ENCODE measurements at regions of chr1 and their contacts with region 1.

Region 1: GRCh38 chr1:9874959-9875635 is 35.0 kb downstream of the CTNNBIP1 start:
- DNase-seq: no peak
- ATAC-seq: peak; percentile 71
- H3K4me3 ChIP-seq: no peak overlapping the region
- H3K27ac ChIP-seq: no peak overlapping the region
- H3K4me1 ChIP-seq: peaks cover 11 to 28% of the 10 kb centered on the region in 2 experiments
- H3K27me3 ChIP-seq: no peaks in the 10 kb centered on the region
- CTCF ChIP-seq: peak; percentile 92 to 96 (median 95)
- POLR2A ChIP-seq: no peak
- RAD21 ChIP-seq: peak; percentile 100

Region 2: DNA sequence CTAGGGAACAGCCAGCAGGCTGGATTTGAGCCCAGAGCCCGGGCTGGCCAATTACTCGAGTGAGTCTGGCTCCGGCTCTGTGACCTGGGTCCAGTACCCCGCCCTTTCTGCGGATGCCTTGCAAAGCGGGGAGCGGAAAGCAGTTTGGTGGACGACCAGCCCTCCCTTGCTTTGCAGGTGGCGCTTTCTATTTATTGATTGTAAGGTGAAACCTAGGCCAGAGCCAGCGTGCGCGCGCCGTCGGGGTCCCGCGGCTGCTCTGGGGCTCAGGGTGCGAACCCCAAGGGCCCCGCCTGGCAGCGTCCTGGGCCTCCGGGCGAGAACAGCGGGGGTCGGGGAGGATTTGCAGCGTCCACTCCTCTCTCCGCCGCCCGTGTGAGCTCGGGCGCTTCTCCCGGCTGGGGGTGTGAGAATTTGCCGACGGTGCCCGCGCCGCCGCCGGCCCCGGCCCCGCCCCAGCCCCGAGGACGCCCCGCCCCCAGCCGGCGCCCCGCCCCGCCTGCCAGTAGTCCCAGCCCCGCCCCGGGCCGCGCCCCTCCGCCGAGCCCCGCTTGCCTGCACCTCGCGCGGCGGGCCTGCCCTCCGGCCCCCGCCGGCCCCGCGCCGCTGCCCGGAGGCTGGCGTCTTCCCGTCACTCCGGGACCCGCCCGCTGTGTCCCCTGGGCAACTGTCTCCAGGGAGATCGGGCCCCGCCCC is 185.9 kb before region 1 on chr1:
- CTCF ChIA-PET with region 1: no interaction called
- POLR2A ChIA-PET with region 1: no interaction called
- RAD21 ChIA-PET with region 1: no interaction called
- intact Hi-C with region 1: no loop called
- DNase-seq: peak; percentile 54
- ATAC-seq: peak; percentile 82
- H3K4me3 ChIP-seq: peak overlapping the region; percentile 68 to 86
- H3K27ac ChIP-seq: peak overlapping the region; percentile 52; the same call in 1 of the 2 replicates
- H3K4me1 ChIP-seq: peaks cover 27 to 48% of the 10 kb centered on the region in 2 experiments
- H3K27me3 ChIP-seq: no peaks in the 10 kb centered on the region
- CTCF ChIP-seq: no peak
- POLR2A ChIP-seq: no peak
- RAD21 ChIP-seq: no peak

Region 3: GRCh38 chr1:9861360-9861759 is 13.7 kb before region 1 on chr1:
- CTCF ChIA-PET with region 1: no interaction called
- POLR2A ChIA-PET with region 1: no interaction called
- RAD21 ChIA-PET with region 1: no interaction called
- intact Hi-C with region 1: no loop called
- DNase-seq: no peak
- ATAC-seq: peak; percentile 34
- H3K4me3 ChIP-seq: no peak overlapping the region
- H3K27ac ChIP-seq: no peak overlapping the region
- H3K4me1 ChIP-seq: no peaks in the 10 kb centered on the region
- H3K27me3 ChIP-seq: no peaks in the 10 kb centered on the region
- CTCF ChIP-seq: no peak
- POLR2A ChIP-seq: no peak
- RAD21 ChIP-seq: peak; percentile 22; the same call in 1 of the 2 replicates

Region 4: GRCh38 chr1:9910425-9911178 is 35.5 kb after region 1 on chr1:
- CTCF ChIA-PET with region 1: interaction called, 19 read pairs
- POLR2A ChIA-PET with region 1: interaction called, 4 read pairs
- RAD21 ChIA-PET with region 1: interaction called, 6 to 13 read pairs
- intact Hi-C with region 1: loop called (anchors 1 kb)
- DNase-seq: peak; percentile 97
- ATAC-seq: peak; percentile 96
- H3K4me3 ChIP-seq: peak overlapping the region; percentile 45 to 63
- H3K27ac ChIP-seq: peak overlapping the region; percentile 90
- H3K4me1 ChIP-seq: peaks cover 10 to 23% of the 10 kb centered on the region in 2 experiments
- H3K27me3 ChIP-seq: no peaks in the 10 kb centered on the region
- CTCF ChIP-seq: no peak
- POLR2A ChIP-seq: peak; percentile 29
- RAD21 ChIP-seq: no peak

Region 5: DNA sequence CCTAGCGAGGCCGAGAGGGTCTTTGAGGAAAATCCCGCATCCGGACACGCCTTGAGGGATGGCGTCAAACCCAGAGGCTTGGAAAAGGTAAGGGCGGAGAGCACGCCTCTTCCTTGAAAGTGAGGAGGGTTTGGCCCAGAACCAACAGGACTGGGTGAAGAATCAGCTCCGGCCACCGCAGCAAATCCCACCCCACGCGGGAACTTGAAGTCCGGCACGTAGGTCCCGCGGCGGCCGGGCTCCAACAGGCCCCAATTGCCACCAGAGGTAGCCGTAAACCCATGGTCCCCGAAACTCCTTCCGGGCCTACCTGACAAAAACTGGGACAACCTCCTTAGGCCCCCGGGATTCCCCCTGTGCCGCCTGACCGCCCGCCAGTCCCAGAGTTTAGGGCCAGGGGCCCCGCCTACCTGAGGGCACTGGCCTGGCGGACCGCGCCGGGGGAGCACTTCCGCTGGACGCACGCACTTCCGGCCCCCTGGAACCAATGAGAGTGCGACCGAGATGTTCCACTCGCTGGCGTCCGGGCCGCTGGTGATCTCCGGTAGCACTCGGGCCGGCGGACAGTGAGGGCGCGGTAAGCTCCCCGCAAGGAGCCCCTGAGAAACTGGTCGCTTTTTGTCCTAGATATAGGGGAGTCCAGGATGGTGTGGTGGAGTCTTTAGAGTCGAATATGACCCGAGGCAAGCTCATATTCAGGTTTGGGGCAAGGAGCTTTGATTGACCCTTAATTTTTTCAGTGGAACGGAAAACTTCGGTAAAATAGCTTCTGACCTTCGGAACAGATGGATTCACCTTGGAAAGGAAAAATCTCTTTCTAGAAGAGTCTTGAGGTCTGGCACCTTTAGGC is 68.1 kb after region 1 on chr1 and contains the starts of genes LZIC and NMNAT1:
- CTCF ChIA-PET with region 1: interaction called, 8 read pairs
- POLR2A ChIA-PET with region 1: interaction called, 11 read pairs
- RAD21 ChIA-PET with region 1: no interaction called
- intact Hi-C with region 1: loop called (anchors 1 kb)
- DNase-seq: peak; percentile 88
- ATAC-seq: peak; percentile 93
- H3K4me3 ChIP-seq: peak within 1 kb of the TSS; percentile 84 to 90
- H3K27ac ChIP-seq: peak within 1 kb of the TSS; percentile 83
- H3K4me1 ChIP-seq: peaks cover 4 to 6% of the 10 kb centered on the region in 2 experiments; a peak in 2 of 4 replicates
- H3K27me3 ChIP-seq: no peaks in the 10 kb centered on the region
- CTCF ChIP-seq: no peak
- POLR2A ChIP-seq: peak; percentile 88
- RAD21 ChIP-seq: no peak; the same call in 1 of the 2 replicates
- total RNA-seq, gene LZIC: 26.6 TPM
- total RNA-seq, gene NMNAT1: 8.6 TPM

Region 6: GRCh38 chr1:10032590-10033358 is 157.7 kb after region 1 on chr1 and contains the start of gene UBE4B:
- CTCF ChIA-PET with region 1: no interaction called
- POLR2A ChIA-PET with region 1: no interaction called
- RAD21 ChIA-PET with region 1: no interaction called
- intact Hi-C with region 1: loop called (anchors 2 kb)
- DNase-seq: peak; percentile 93
- ATAC-seq: peak; percentile 93
- H3K4me3 ChIP-seq: peak within 1 kb of the TSS; percentile 86 to 98
- H3K27ac ChIP-seq: peak within 1 kb of the TSS; percentile 82
- H3K4me1 ChIP-seq: peaks cover 15 to 23% of the 10 kb centered on the region in 2 experiments
- H3K27me3 ChIP-seq: no peaks in the 10 kb centered on the region
- CTCF ChIP-seq: peak; percentile 76 to 88 (median 77)
- POLR2A ChIP-seq: peak; percentile 46
- RAD21 ChIP-seq: peak; percentile 83
- total RNA-seq, gene UBE4B: 44.7 TPM

Region 7: DNA sequence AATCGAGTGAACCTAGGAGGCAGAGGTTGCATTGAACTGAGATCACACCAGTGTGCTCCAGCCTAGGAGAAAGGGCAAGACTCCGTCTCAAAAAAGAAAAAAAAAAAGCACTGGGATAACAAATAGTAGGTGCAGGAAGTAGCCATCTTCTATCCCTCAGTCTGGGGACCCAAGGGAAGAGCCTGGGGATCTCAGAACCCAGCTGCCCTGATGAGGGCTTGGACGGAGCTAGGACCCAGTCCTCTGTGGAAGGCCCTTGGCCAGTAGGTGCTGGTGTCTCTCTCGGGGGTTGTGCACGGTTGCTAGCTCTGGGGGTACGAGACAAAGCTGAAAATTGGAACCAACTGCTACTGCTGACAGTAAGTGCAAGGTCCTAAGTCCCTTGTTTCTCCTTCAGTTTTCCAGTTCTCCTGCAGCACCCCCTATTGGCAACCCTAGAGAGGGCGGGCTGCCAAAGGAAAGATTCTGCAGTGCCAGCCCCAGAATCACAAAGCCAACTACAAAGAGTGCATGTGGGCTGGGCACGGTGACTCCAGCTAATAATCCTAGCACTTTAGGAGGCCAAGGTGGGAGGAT is 277.7 kb after region 1 on chr1:
- CTCF ChIA-PET with region 1: interaction called, 3 read pairs
- POLR2A ChIA-PET with region 1: no interaction called
- RAD21 ChIA-PET with region 1: interaction called in 1 of 2 experiments, 6 read pairs
- intact Hi-C with region 1: loop called (anchors 2 kb)
- DNase-seq: peak; percentile 16
- ATAC-seq: peak; percentile 81
- H3K4me3 ChIP-seq: no peak overlapping the region
- H3K27ac ChIP-seq: no peak overlapping the region
- H3K4me1 ChIP-seq: no peaks in the 10 kb centered on the region
- H3K27me3 ChIP-seq: no peaks in the 10 kb centered on the region
- CTCF ChIP-seq: peak; percentile 60 to 87 (median 75); a peak in 5 of 6 replicates
- POLR2A ChIP-seq: no peak
- RAD21 ChIP-seq: peak; percentile 82

Region 8: DNA sequence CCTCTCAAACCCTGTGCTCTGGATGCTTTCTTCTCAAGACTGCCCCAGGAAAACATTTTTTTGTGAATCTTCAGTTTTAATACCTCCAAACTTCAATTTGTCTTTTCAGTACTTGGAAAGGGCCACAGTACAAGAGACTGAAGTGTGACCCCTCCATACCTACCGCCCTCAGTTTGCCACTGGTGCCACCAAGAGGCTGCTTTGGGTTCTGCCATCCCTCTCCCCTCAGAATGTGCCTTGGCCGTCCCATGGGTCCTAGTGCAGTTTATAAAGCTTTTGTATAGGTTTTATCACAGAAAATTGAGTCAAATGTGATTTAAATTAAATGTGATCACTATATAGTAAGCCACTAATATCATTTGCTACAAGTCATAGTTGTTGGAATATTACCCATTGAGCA is 462.9 kb after region 1 on chr1:
- CTCF ChIA-PET with region 1: no interaction called
- POLR2A ChIA-PET with region 1: no interaction called
- RAD21 ChIA-PET with region 1: no interaction called
- intact Hi-C with region 1: loop called (anchors 5 kb)
- DNase-seq: peak; percentile 16
- ATAC-seq: peak; percentile 96
- H3K4me3 ChIP-seq: no peak overlapping the region
- H3K27ac ChIP-seq: no peak overlapping the region
- H3K4me1 ChIP-seq: peaks cover 3 to 7% of the 10 kb centered on the region in 2 experiments
- H3K27me3 ChIP-seq: no peaks in the 10 kb centered on the region
- CTCF ChIP-seq: peak; percentile 70 to 89 (median 86); a peak in 5 of 6 replicates
- POLR2A ChIP-seq: no peak
- RAD21 ChIP-seq: peak; percentile 91

Region 9: DNA sequence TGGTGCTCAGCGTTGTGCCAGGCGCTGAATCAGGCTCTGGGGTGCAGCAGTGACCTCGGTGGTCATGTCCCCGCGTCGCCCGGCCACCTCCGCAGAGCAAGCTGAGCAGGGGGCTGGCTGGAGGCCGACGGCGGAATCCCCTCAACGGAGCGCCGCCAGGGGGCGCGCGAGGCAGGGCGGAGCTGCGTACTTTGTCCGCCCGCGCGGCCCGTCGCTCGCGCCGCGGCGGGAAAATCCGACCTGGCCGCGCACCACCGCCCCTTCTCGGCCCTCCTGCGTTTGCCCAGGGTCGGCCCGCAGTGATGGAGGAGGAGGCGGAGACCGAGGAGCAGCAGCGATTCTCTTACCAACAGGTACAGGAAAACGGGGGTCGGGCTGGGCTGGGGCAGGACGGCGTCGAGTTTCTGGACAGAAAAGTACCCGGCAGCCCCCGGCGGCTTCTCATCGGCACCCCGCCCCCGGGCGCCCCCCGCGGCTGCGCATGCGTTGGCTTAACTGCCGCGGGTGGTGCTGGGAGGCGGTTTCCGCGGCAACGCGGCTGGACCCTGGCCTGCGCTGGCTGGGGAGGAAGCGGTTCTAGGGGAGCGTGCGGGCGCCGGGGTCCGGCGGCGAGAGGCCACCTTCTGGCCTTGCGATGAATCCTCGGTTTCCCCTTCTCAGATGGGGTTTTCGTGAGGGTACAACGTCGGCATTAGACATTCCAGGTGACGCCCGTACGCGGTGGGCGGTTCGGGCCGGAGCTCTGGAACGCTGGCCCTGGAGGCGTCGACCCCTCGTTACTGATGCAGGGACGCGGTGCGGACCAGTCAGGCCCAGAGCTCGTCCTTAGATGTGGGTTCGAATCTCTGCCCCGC is 555.3 kb after region 1 on chr1 and contains the start of gene CENPS:
- CTCF ChIA-PET with region 1: no interaction called
- POLR2A ChIA-PET with region 1: no interaction called
- RAD21 ChIA-PET with region 1: no interaction called
- intact Hi-C with region 1: loop called (anchors 5 kb)
- DNase-seq: peak; percentile 68
- ATAC-seq: peak; percentile 86
- H3K4me3 ChIP-seq: peak within 1 kb of the TSS; percentile 67 to 90
- H3K27ac ChIP-seq: peak within 1 kb of the TSS; percentile 66
- H3K4me1 ChIP-seq: peaks cover 2 to 19% of the 10 kb centered on the region in 2 experiments; a peak in 3 of 4 replicates
- H3K27me3 ChIP-seq: no peaks in the 10 kb centered on the region
- CTCF ChIP-seq: peak; percentile 76 to 86 (median 84)
- POLR2A ChIP-seq: peak; percentile 70
- RAD21 ChIP-seq: peak; percentile 76
- total RNA-seq, gene CENPS: 21.9 TPM

Region 10: GRCh38 chr1:10612436-10613160 is 737.5 kb after region 1 on chr1:
- CTCF ChIA-PET with region 1: no interaction called
- POLR2A ChIA-PET with region 1: no interaction called
- RAD21 ChIA-PET with region 1: no interaction called
- intact Hi-C with region 1: no loop called
- DNase-seq: no peak
- ATAC-seq: no peak
- H3K4me3 ChIP-seq: no peak overlapping the region
- H3K27ac ChIP-seq: no peak overlapping the region
- H3K4me1 ChIP-seq: no peaks in the 10 kb centered on the region
- H3K27me3 ChIP-seq: no peaks in the 10 kb centered on the region
- CTCF ChIP-seq: no peak
- POLR2A ChIP-seq: no peak
- RAD21 ChIP-seq: no peak